SK-N-SH (cell line): ENCODE measurements at regions of chr11 and their contacts with region 1.

Region 1: GRCh38 chr11:60841797-60842667 is at the start of gene CCDC86:
- DNase-seq: peak; percentile 99
- H3K4me3 ChIP-seq: peak within 1 kb of the TSS; percentile 85 to 98
- H3K27ac ChIP-seq: peak within 1 kb of the TSS; percentile 57 to 66; a peak in 3 of 4 replicates
- H3K4me1 ChIP-seq: peaks cover 0 to 34% of the 10 kb centered on the region in 2 experiments; a peak in 3 of 4 replicates
- H3K27me3 ChIP-seq: no peaks in the 10 kb centered on the region
- CTCF ChIP-seq: no peak
- EP300 ChIP-seq: 0 out of 4 replicates have a peak, but pooled peaks of 1 of the 2 experiments have one; percentile 14
- RAD21 ChIP-seq: no peak
- polyA plus RNA-seq, gene CCDC86: 26.1 and 34.7 TPM in 2 replicates

Region 2: GRCh38 chr11:60906132-60906972 is 64.3 kb after region 1 on chr11 and contains the start of gene PRPF19:
- CTCF ChIA-PET with region 1: interaction called, 550 read pairs
- POLR2A ChIA-PET with region 1: interaction called, 3 read pairs
- DNase-seq: peak; percentile 97
- H3K4me3 ChIP-seq: peak within 1 kb of the TSS; percentile 92 to 99
- H3K27ac ChIP-seq: peak within 1 kb of the TSS; percentile 83 to 90
- H3K4me1 ChIP-seq: peaks cover 0 to 17% of the 10 kb centered on the region in 2 experiments; a peak in 2 of 4 replicates
- H3K27me3 ChIP-seq: no peaks in the 10 kb centered on the region; the same call in 1 of the 2 replicates
- CTCF ChIP-seq: no peak
- EP300 ChIP-seq: no peak
- RAD21 ChIP-seq: no peak
- polyA plus RNA-seq, gene PRPF19: 44.0 and 58.9 TPM in 2 replicates